ENCODE measurements at regions of chr6 and their contacts with region 1.

Region 1: DNA sequence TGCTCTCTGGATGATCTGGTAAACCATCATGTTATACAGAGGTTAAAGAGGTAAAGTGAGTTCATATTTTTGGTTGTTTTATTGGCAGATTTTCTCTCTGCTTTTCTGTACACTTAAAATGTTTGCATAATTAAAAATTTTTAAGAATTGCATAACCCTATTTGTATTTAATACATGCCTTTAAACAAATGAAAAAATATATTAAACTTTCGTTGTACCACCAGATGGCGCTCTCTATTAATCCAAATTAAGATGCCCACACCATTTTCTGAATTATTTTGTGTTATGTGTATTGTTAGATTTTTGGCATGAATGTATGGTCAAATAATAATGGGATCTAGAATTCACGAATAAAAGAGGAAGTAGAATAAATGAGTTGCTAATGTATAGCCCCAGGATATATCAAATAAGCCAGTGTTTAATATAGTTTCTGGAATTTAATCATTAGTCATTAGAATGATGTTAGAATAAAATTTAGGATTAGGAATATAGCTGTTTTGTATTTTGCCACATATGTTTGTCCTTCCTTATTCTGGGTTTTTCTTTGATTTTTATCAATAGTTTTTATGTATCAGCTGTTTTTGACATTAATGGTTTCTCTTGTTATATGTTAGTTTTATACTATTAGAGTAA is 38.9 kb downstream of the SMAP1 start:
- DNase-seq: peak in 3 of 4 experiments; percentile 10 to 49 (median 13)
- ATAC-seq: no peak
- H3K4me3 ChIP-seq: no peak overlapping the region
- H3K27ac ChIP-seq: no peak overlapping the region
- H3K4me1 ChIP-seq: no peaks in the 10 kb centered on the region
- H3K27me3 ChIP-seq: no peaks in the 10 kb centered on the region
- CTCF ChIP-seq: peak in 2 of 3 experiments; percentile 42 to 74; a peak in 3 of 6 replicates
- EP300 ChIP-seq: no peak
- POLR2A ChIP-seq: no peak
- RAD21 ChIP-seq: peak; percentile 64 to 78

Region 2: DNA sequence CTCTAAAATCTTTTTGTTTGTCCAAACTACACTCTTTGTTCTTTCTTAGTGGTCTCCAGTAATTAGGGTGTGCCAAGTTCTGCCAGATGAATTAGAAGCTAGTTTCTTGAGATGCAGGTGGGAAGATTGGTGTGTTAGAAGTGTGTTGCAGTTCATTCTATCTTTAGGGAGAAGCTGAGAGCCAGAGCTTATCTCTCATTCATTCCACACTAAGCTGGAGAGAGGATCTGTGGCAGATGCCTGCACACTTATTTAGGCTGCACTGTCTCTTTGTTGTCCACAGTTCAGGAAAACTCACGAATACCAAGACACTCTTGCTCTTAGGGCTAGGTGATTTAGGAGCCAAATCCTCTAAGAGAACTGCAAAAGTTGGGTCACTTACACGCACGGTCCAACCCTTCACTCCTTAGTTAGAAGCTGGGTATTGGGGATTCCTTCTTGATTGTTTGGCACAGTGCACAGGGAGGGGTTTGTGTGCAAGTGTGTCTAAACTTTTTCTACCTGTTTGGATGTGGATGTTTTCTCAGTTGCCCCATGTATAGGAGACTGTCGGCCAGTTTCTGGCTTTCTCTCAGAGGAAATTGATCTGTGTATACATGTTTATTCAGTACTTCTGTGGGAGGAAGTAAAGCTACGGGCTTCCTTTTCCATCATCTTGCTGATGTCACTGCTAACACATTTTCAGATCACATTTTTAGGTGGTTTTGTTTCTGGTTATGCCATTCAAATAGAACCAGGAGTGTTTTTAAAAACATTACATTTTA is 10.6 kb after region 1 on chr6:
- CTCF ChIA-PET with region 1: no interaction called
- POLR2A ChIA-PET with region 1: no interaction called
- in situ Hi-C with region 1: no loop called
- intact Hi-C with region 1: no loop called
- DNase-seq: no peak
- ATAC-seq: no peak
- H3K4me3 ChIP-seq: no peak overlapping the region
- H3K27ac ChIP-seq: no peak overlapping the region
- H3K4me1 ChIP-seq: no peaks in the 10 kb centered on the region
- H3K27me3 ChIP-seq: no peaks in the 10 kb centered on the region
- CTCF ChIP-seq: no peak
- EP300 ChIP-seq: no peak
- POLR2A ChIP-seq: no peak
- RAD21 ChIP-seq: no peak

Region 3: GRCh38 chr6:70806086-70806485 is 99.5 kb after region 1 on chr6:
- CTCF ChIA-PET with region 1: no interaction called
- POLR2A ChIA-PET with region 1: no interaction called
- in situ Hi-C with region 1: no loop called
- intact Hi-C with region 1: no loop called
- DNase-seq: no peak
- ATAC-seq: no peak
- H3K4me3 ChIP-seq: no peak overlapping the region
- H3K27ac ChIP-seq: no peak overlapping the region
- H3K4me1 ChIP-seq: no peaks in the 10 kb centered on the region
- H3K27me3 ChIP-seq: no peaks in the 10 kb centered on the region
- CTCF ChIP-seq: no peak
- EP300 ChIP-seq: no peak
- POLR2A ChIP-seq: no peak
- RAD21 ChIP-seq: no peak

Region 4: DNA sequence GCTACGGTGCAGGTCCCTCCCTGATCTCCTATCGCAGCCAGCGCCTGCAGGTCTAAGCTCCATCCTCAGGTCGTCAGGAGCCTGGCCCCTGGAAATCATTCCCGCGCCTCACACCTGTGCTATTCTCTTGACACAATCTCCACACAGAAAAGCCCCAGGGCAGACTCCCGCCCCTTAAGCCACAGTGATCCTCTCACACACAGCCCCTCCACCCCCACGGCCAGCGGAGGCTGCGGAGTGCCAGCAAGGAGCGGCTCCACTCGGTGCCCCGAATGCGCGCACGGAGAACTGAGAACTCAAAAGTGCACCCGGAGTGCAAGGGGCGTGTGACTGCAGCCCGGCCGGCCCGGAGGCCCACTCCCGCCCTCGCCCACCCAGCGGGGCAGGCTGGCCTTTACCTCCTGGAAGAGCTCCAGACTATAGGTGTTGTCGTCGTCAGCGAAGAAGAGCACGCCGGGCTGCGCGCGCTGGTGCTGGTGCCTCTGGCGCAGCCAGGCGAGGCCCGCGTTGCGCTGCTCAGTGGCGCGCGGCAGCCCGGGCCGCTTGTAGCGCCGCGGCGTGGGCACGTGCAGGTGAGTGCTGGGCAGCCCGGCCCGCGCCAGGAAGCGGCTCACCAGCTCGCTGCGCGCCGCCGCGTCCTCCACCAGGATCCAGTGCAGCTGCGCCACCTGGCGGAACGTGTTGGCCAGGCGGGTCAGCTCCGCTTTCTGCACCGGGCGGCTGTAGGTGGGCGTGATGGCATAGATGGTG is 249.0 kb after region 1 on chr6:
- CTCF ChIA-PET with region 1: interaction called, 6 read pairs
- POLR2A ChIA-PET with region 1: no interaction called
- in situ Hi-C with region 1: loop called (anchors 10 kb)
- intact Hi-C with region 1: loop called (anchors 2 kb)
- DNase-seq: peak; percentile 76 to 82 (median 78)
- ATAC-seq: peak; percentile 99
- H3K4me3 ChIP-seq: peak overlapping the region; percentile 43
- H3K27ac ChIP-seq: no peak overlapping the region
- H3K4me1 ChIP-seq: peaks cover 0 to 20% of the 10 kb centered on the region in 2 experiments; a peak in 2 of 5 replicates
- H3K27me3 ChIP-seq: peaks cover 5 to 14% of the 10 kb centered on the region in 2 experiments; a peak in 3 of 5 replicates
- CTCF ChIP-seq: peak; percentile 69 to 89 (median 75)
- EP300 ChIP-seq: no peak
- POLR2A ChIP-seq: no peak
- RAD21 ChIP-seq: peak; percentile 78 to 81

Region 5: GRCh38 chr6:71012866-71013469 is 306.4 kb after region 1 on chr6:
- CTCF ChIA-PET with region 1: interaction called, 4 read pairs
- POLR2A ChIA-PET with region 1: no interaction called
- in situ Hi-C with region 1: no loop called
- intact Hi-C with region 1: loop called (anchors 2 kb)
- DNase-seq: peak; percentile 57 to 70 (median 64)
- ATAC-seq: peak; percentile 93
- H3K4me3 ChIP-seq: no peak overlapping the region
- H3K27ac ChIP-seq: no peak overlapping the region
- H3K4me1 ChIP-seq: no peaks in the 10 kb centered on the region
- H3K27me3 ChIP-seq: no peaks in the 10 kb centered on the region
- CTCF ChIP-seq: peak; percentile 64 to 76 (median 71)
- EP300 ChIP-seq: no peak
- POLR2A ChIP-seq: no peak
- RAD21 ChIP-seq: peak; percentile 72 to 83

Region 6: GRCh38 chr6:71091946-71092345 is 385.3 kb after region 1 on chr6:
- CTCF ChIA-PET with region 1: no interaction called
- POLR2A ChIA-PET with region 1: no interaction called
- in situ Hi-C with region 1: no loop called
- intact Hi-C with region 1: no loop called
- DNase-seq: no peak
- ATAC-seq: no peak
- H3K4me3 ChIP-seq: no peak overlapping the region
- H3K27ac ChIP-seq: no peak overlapping the region
- H3K4me1 ChIP-seq: no peaks in the 10 kb centered on the region
- H3K27me3 ChIP-seq: no peaks in the 10 kb centered on the region
- CTCF ChIP-seq: no peak
- EP300 ChIP-seq: no peak
- POLR2A ChIP-seq: no peak
- RAD21 ChIP-seq: no peak

Region 7: GRCh38 chr6:71349395-71349794 is 642.8 kb after region 1 on chr6:
- CTCF ChIA-PET with region 1: no interaction called
- POLR2A ChIA-PET with region 1: no interaction called
- in situ Hi-C with region 1: no loop called
- intact Hi-C with region 1: loop called (anchors 5 kb)
- DNase-seq: peak in 2 of 4 experiments; percentile 8 to 20
- ATAC-seq: no peak
- H3K4me3 ChIP-seq: no peak overlapping the region
- H3K27ac ChIP-seq: no peak overlapping the region
- H3K4me1 ChIP-seq: no peaks in the 10 kb centered on the region
- H3K27me3 ChIP-seq: no peaks in the 10 kb centered on the region
- CTCF ChIP-seq: peak in 1 of 3 experiments; percentile 42; a peak in 2 of 6 replicates
- EP300 ChIP-seq: no peak
- POLR2A ChIP-seq: no peak
- RAD21 ChIP-seq: peak; percentile 32 to 54

Measured in K562 (cell line).